PC-9 (cell line): ENCODE measurements at regions of chr1 and their contacts with region 1.

Region 1: DNA sequence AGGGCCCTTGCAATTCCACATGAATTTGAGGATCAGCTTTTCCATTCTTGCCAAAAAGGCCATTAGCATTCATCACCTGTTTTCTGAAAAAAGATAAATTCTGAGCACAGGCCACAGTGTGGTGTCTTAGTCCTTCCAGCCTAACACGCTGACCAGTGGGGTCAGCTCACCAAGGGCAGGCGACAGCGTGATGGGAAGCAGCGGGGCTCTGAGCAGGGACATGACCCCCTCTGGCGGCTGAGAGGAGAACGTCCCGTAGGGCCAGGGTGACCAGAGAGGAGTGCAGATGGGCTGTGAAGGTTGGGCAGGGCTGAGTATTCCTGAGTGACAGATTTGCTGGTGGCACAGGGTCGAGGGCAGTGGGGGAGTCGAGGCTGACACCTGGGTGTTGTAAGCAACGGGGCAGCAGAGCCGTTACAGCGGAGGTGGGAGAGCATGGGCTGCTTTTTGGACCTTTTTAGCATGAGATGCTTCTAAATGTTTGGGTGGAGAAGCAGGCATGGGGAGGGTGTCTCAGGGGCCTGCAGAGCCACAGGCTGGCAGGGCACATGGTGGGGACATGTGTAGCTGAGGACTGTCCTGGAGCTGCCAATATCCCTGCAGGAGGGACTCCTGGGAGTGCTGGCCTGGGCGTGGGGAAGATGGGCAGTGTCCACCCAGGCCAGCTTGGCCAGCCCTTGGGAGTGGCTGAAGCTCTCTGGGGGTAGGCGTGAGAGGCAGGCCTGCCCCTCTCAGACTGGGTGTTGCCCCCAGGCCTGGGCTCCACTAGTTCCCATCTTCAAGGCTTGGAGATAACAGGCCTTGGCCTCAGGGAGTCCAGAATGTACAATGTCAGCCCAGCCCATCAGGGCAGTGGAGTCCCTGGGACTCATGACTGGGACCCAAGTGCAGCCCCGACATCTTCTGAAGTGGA is 8.6 kb upstream of the CALML6 start:
- DNase-seq: peak; percentile 62 to 83
- H3K4me3 ChIP-seq: no peak overlapping the region
- H3K27ac ChIP-seq: no peak overlapping the region
- H3K4me1 ChIP-seq: peaks cover 12% of the 10 kb centered on the region; the same call in 1 of the 2 replicates
- H3K27me3 ChIP-seq: no peaks in the 10 kb centered on the region
- CTCF ChIP-seq: peak; percentile 90

Region 2: GRCh38 chr1:1471389-1472052 is 434.9 kb before region 1 on chr1 and contains the start of gene ATAD3B:
- CTCF ChIA-PET with region 1: no interaction called
- POLR2A ChIA-PET with region 1: no interaction called
- intact Hi-C with region 1: no loop called
- DNase-seq: peak; percentile 79 to 88
- H3K4me3 ChIP-seq: peak within 1 kb of the TSS; percentile 90
- H3K27ac ChIP-seq: peak within 1 kb of the TSS; percentile 68
- H3K4me1 ChIP-seq: peaks cover 13% of the 10 kb centered on the region; the same call in 1 of the 2 replicates
- H3K27me3 ChIP-seq: no peaks in the 10 kb centered on the region
- CTCF ChIP-seq: no peak
- total RNA-seq, gene ATAD3B: 28.5 and 32.8 TPM in 2 replicates

Region 3: DNA sequence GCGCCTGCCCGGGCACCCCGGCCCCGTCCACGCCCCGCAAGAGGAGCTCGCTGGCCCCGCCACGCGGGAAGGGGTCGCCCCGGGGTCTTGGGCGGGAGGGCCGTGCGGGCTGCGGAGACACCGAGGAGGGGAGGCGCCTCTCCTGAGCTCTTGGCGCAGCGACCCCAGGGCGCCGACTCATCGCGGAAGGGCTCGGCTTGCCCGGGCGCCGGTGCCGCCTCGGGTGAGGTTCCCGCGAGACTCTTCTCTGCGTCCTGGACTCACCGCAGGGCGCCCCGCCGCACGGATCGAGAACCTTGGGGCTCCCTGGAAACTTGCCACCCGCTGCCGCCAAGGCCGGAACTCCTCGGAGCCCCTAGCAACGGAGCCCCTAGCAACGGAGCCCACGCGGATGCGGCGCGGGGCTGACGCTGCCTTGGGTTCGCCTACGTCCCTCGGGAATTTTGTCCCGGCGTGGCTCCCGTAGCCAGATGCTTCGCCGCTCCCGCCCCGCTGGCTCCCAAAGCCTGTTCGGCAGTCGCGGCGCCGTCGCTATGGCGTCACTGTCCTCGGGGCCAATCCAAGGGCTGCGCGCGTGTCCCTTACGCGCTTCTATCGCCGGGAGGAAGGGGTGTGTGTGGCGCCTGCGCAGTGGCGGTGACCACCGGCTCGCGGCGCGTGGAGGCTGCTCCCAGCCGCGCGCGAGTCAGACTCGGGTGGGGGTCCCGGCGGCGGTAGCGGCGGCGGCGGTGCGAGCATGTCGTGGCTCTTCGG is 394.7 kb before region 1 on chr1 and contains the start of gene ATAD3A:
- CTCF ChIA-PET with region 1: no interaction called
- POLR2A ChIA-PET with region 1: no interaction called
- intact Hi-C with region 1: loop called (anchors 5 kb)
- DNase-seq: peak; percentile 89 to 96
- H3K4me3 ChIP-seq: peak within 1 kb of the TSS; percentile 85
- H3K27ac ChIP-seq: peak within 1 kb of the TSS; percentile 76
- H3K4me1 ChIP-seq: peaks cover 6% of the 10 kb centered on the region
- H3K27me3 ChIP-seq: no peaks in the 10 kb centered on the region
- CTCF ChIP-seq: no peak
- total RNA-seq, gene ATAD3A: 36.6 and 43.6 TPM in 2 replicates

Region 4: GRCh38 chr1:1779706-1780597 is 126.5 kb before region 1 on chr1:
- CTCF ChIA-PET with region 1: no interaction called
- POLR2A ChIA-PET with region 1: no interaction called
- intact Hi-C with region 1: loop called (anchors 5 kb)
- DNase-seq: peak; percentile 60 to 69
- H3K4me3 ChIP-seq: peak overlapping the region; percentile 93; the same call in 1 of the 2 replicates
- H3K27ac ChIP-seq: peak overlapping the region; percentile 87
- H3K4me1 ChIP-seq: peaks cover 69% of the 10 kb centered on the region
- H3K27me3 ChIP-seq: no peaks in the 10 kb centered on the region
- CTCF ChIP-seq: no peak

Region 5: GRCh38 chr1:1968767-1969504 is 62.5 kb after region 1 on chr1:
- CTCF ChIA-PET with region 1: interaction called, 14 read pairs
- POLR2A ChIA-PET with region 1: no interaction called
- intact Hi-C with region 1: no loop called
- DNase-seq: peak in 1 of 2 experiments; percentile 62
- H3K4me3 ChIP-seq: no peak overlapping the region
- H3K27ac ChIP-seq: no peak overlapping the region
- H3K4me1 ChIP-seq: no peaks in the 10 kb centered on the region
- H3K27me3 ChIP-seq: peaks cover 28% of the 10 kb centered on the region
- CTCF ChIP-seq: no peak

Region 6: DNA sequence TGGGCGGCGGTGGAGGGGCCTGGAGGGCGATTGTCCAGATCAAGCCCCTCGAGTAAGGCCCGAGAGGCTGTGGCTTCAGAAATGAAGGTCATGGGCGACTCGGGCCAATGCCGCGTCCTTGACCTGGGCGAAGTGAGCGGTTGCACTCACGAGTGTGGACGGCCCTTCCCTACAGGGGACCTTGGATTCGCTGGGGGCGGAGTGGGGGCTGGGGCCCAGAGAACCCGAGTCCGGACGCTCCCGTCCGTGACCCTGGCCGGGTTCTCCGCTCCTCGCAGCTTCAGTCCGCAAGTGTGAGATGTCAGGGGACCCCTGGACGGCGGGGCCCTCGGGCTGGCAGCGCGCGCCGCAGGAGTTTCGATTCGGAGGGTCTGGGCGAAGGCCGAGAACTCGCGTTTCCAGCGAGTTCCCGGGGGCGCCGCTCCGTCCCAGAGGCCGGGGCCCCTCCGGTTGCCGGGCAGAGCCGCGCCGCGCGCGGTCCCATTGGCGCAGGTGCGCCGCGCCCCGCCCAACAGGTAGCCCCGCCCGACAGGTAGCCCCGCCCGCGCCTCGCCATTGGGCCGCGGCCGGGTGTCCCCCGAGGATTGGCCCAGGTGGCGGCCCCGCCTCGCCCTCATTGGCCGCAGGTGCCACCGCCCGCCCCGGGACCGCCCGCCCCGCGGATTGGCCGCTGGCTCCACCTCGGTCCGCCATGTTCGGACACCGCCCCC is 143.4 kb after region 1 on chr1 and contains the start of gene PRKCZ:
- CTCF ChIA-PET with region 1: interaction called, 15 read pairs
- POLR2A ChIA-PET with region 1: no interaction called
- intact Hi-C with region 1: loop called (anchors 1 kb)
- DNase-seq: peak; percentile 80 to 98
- H3K4me3 ChIP-seq: peak within 1 kb of the TSS; percentile 79
- H3K27ac ChIP-seq: peak within 1 kb of the TSS; percentile 56
- H3K4me1 ChIP-seq: 0 out of 2 replicates have a peak, but pooled peaks cover 5% of the 10 kb centered on the region
- H3K27me3 ChIP-seq: no peaks in the 10 kb centered on the region
- CTCF ChIP-seq: peak; percentile 6
- total RNA-seq, gene PRKCZ: 36.0 and 36.2 TPM in 2 replicates